ENCODE measurements at regions of chr2 and their contacts with region 1.

Region 1: GRCh38 chr2:152335010-152335725 is at the start of gene FMNL2:
- DNase-seq: peak; percentile 88
- ATAC-seq: peak; percentile 91
- H3K4me3 ChIP-seq: peak within 1 kb of the TSS; percentile 95 to 98 (median 96)
- H3K27ac ChIP-seq: peak within 1 kb of the TSS; percentile 69
- H3K4me1 ChIP-seq: peaks cover 41% of the 10 kb centered on the region
- H3K27me3 ChIP-seq: peaks cover 0 to 20% of the 10 kb centered on the region in 2 experiments; a peak in 4 of 5 replicates
- CTCF ChIP-seq: peak; percentile 52
- EP300 ChIP-seq: peak in 1 of 2 experiments; percentile 44; a peak in 2 of 4 replicates
- POLR2A ChIP-seq: peak; percentile 93 to 97
- RAD21 ChIP-seq: peak; percentile 83
- total RNA-seq, gene FMNL2: 63.2 and 66.5 TPM in 2 replicates

Region 2: GRCh38 chr2:152175458-152176325 is 159.5 kb before region 1 on chr2 and contains the start of gene STAM2:
- CTCF ChIA-PET with region 1: interaction called, 3 read pairs
- POLR2A ChIA-PET with region 1: interaction called, 4 read pairs
- in situ Hi-C with region 1: no loop called
- intact Hi-C with region 1: loop called (anchors 2 kb)
- DNase-seq: peak; percentile 89
- ATAC-seq: peak; percentile 92
- H3K4me3 ChIP-seq: peak within 1 kb of the TSS; percentile 90 to 99 (median 91)
- H3K27ac ChIP-seq: peak within 1 kb of the TSS; percentile 94
- H3K4me1 ChIP-seq: peaks cover 30% of the 10 kb centered on the region
- H3K27me3 ChIP-seq: no peaks in the 10 kb centered on the region; a peak in 1 of 5 replicates
- CTCF ChIP-seq: peak; percentile 99
- EP300 ChIP-seq: peak; percentile 3 to 38; a peak in 1 of 4 replicates
- POLR2A ChIP-seq: peak; percentile 93 to 96
- RAD21 ChIP-seq: peak; percentile 98
- total RNA-seq, gene STAM2: 24.1 and 29.2 TPM in 2 replicates

Region 3: GRCh38 chr2:152301131-152301530 is 34.0 kb before region 1 on chr2:
- CTCF ChIA-PET with region 1: no interaction called
- POLR2A ChIA-PET with region 1: no interaction called
- in situ Hi-C with region 1: no loop called
- intact Hi-C with region 1: no loop called
- DNase-seq: no peak
- ATAC-seq: no peak
- H3K4me3 ChIP-seq: no peak overlapping the region
- H3K27ac ChIP-seq: no peak overlapping the region
- H3K4me1 ChIP-seq: no peaks in the 10 kb centered on the region
- H3K27me3 ChIP-seq: peaks cover 0 to 23% of the 10 kb centered on the region in 2 experiments; a peak in 2 of 5 replicates
- CTCF ChIP-seq: no peak
- EP300 ChIP-seq: no peak
- POLR2A ChIP-seq: no peak
- RAD21 ChIP-seq: no peak

Region 4: DNA sequence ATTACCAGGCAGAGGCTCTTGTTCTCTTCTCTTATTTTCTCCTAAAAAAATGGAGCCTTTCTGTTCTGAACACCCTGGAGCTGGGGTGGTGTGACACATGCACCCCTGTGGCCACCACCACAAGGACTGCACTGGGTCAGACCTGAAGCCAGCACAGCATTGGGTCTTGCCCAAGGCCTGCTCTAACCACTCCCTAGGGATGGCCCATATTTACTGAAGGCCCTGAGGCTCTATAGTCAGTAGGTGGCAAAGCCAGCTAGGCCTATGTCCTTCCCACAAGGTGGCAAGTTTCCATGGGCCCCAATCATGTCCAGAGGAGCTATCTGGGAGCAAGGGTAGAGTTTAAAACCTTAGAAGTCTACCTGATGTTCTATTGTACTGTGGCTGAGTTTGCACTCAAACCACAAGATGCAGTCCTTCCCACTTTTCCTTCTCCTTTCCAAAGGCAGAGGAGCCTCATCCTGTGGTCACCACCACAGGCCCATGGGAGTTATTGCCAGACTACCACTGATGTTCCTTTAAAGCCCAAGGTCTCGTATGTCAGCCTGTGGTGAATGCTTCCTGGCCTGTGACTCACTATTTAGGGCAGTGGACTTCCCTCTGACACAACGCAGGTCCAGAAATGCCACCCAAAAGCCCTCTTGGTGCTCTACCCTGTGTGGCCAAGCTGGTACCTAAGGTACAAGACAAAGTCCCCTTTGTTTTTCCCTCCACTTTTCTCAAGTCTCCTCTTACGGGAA is 15.2 kb before region 1 on chr2:
- CTCF ChIA-PET with region 1: no interaction called
- POLR2A ChIA-PET with region 1: no interaction called
- in situ Hi-C with region 1: no loop called
- intact Hi-C with region 1: no loop called
- DNase-seq: no peak
- ATAC-seq: peak; percentile 79
- H3K4me3 ChIP-seq: no peak overlapping the region
- H3K27ac ChIP-seq: no peak overlapping the region
- H3K4me1 ChIP-seq: no peaks in the 10 kb centered on the region
- H3K27me3 ChIP-seq: no peaks in the 10 kb centered on the region
- CTCF ChIP-seq: no peak
- EP300 ChIP-seq: no peak
- POLR2A ChIP-seq: no peak
- RAD21 ChIP-seq: no peak

Region 5: DNA sequence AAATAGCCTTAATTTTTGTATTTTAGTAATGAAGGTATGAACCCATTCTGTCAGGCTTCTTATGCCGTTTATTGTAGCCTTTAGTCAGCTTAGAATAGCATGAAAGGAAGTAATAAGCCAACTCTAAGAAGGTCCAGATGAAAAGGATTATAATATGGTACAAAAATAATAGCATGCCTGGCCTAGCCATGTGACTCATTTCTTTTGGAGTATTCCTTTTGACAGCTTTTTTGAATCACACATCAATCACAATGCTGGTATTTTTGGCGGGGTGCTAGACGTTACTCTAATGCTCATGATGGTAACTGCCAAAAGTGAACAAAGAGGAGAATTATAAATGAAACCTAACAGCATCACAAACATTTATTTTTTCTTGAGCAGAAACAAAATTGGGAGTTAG is 19.7 kb after region 1 on chr2:
- CTCF ChIA-PET with region 1: no interaction called
- POLR2A ChIA-PET with region 1: interaction called, 10 read pairs
- in situ Hi-C with region 1: no loop called
- intact Hi-C with region 1: loop called (anchors 2 kb)
- DNase-seq: no peak
- ATAC-seq: no peak
- H3K4me3 ChIP-seq: peak overlapping the region in 1 of 3 experiments; percentile 8; a peak in 1 of 6 replicates
- H3K27ac ChIP-seq: peak overlapping the region; percentile 56
- H3K4me1 ChIP-seq: peaks cover 88% of the 10 kb centered on the region
- H3K27me3 ChIP-seq: no peaks in the 10 kb centered on the region
- CTCF ChIP-seq: no peak
- EP300 ChIP-seq: no peak
- POLR2A ChIP-seq: no peak
- RAD21 ChIP-seq: no peak

Region 6: DNA sequence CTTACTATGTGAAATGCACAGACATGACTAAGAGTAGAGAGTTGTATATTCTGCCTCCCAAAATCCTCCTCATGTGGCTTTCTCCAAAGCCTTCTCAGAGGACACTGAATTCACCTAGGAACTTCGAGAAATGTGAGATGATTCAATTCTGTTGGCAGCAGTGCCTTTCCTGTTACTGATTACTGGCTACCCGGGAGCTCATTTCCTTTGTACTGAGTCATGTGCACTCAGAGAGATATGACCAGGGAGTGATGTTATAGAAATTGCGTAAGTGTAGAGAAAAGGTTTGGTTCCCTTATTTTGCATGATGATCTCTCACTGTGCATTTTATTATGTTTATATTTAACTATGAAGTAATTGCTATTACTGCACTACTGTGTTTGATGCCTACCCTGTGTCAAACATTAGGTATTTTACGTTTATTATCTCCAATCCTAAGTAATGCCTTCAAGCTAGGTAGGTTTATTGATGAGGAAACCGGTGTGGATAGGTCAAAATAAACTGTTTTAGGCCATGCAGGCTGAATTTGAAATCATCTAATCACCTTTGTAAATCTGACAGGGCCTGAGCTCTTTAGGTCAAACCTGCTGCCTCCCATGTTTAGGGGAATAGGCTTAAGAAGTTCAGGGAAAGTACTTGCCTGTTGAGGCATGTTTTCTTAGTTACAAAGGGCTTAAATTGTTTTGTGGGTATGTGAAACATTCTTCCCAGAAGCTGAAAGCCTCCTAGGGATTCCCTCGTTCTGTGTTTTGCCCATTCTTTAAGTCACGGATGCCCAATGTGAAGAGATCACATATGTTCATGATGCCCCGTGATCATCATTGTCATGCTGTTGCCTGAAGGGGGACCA is 86.6 kb after region 1 on chr2:
- CTCF ChIA-PET with region 1: no interaction called
- POLR2A ChIA-PET with region 1: interaction called, 6 read pairs
- in situ Hi-C with region 1: no loop called
- intact Hi-C with region 1: loop called (anchors 5 kb)
- DNase-seq: peak; percentile 89
- ATAC-seq: peak; percentile 74
- H3K4me3 ChIP-seq: no peak overlapping the region
- H3K27ac ChIP-seq: peak overlapping the region; percentile 11
- H3K4me1 ChIP-seq: peaks cover 73% of the 10 kb centered on the region
- H3K27me3 ChIP-seq: no peaks in the 10 kb centered on the region
- CTCF ChIP-seq: no peak
- EP300 ChIP-seq: peak in 1 of 2 experiments; percentile 65; a peak in 2 of 4 replicates
- POLR2A ChIP-seq: no peak
- RAD21 ChIP-seq: no peak

Region 7: GRCh38 chr2:152485954-152486736 is 151.0 kb after region 1 on chr2:
- CTCF ChIA-PET with region 1: no interaction called
- POLR2A ChIA-PET with region 1: interaction called, 18 read pairs
- in situ Hi-C with region 1: loop called (anchors 5 kb)
- intact Hi-C with region 1: no loop called
- DNase-seq: peak; percentile 99
- ATAC-seq: peak; percentile 96
- H3K4me3 ChIP-seq: peak overlapping the region in 2 of 3 experiments; percentile 6 to 36; a peak in 3 of 6 replicates
- H3K27ac ChIP-seq: peak overlapping the region; percentile 84
- H3K4me1 ChIP-seq: peaks cover 100% of the 10 kb centered on the region
- H3K27me3 ChIP-seq: no peaks in the 10 kb centered on the region
- CTCF ChIP-seq: no peak
- EP300 ChIP-seq: peak; percentile 62 to 99; a peak in 2 of 4 replicates
- POLR2A ChIP-seq: peak in 1 of 2 experiments; percentile 48; a peak in 1 of 4 replicates
- RAD21 ChIP-seq: peak; percentile 41; the same call in 1 of the 2 replicates

Region 8: DNA sequence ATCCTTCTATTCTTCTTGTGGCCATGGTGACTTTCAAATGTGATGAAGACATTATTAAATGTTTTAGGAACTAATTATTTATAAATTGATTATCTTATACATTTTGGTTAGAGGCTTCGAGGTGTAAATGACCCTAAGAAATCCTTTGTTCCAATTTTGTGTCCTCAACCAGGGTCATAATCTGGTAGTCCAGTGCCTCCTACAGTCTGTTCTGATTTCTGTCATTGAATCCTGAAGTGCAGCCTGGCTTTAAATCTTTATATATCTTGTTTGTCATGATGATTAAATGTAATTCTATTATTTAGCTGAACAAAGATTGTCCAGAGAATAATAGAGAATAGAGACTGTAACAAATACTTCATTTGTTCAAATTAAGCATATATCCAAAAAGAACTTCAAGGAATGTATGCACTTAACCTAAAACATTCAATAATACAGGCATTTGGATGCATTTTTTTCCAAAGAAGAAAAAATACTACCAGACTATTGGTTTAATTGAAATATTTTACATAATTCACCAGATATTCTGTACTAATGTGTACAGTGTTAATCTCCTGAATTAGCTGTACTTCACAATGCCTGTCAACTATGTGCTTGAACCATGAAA is 292.3 kb after region 1 on chr2:
- CTCF ChIA-PET with region 1: no interaction called
- POLR2A ChIA-PET with region 1: no interaction called
- in situ Hi-C with region 1: loop called (anchors 10 kb)
- intact Hi-C with region 1: loop called (anchors 2 kb)
- DNase-seq: no peak
- ATAC-seq: peak; percentile 42; the same call in 1 of the 3 replicates
- H3K4me3 ChIP-seq: no peak overlapping the region
- H3K27ac ChIP-seq: no peak overlapping the region
- H3K4me1 ChIP-seq: peaks cover 5% of the 10 kb centered on the region; the same call in 1 of the 2 replicates
- H3K27me3 ChIP-seq: no peaks in the 10 kb centered on the region
- CTCF ChIP-seq: peak; percentile 46
- EP300 ChIP-seq: no peak
- POLR2A ChIP-seq: no peak
- RAD21 ChIP-seq: no peak

Measured in HepG2 (cell line).